MCF 10A (cell line): ENCODE measurements at regions of chr6 and their contacts with region 1.

Region 1: DNA sequence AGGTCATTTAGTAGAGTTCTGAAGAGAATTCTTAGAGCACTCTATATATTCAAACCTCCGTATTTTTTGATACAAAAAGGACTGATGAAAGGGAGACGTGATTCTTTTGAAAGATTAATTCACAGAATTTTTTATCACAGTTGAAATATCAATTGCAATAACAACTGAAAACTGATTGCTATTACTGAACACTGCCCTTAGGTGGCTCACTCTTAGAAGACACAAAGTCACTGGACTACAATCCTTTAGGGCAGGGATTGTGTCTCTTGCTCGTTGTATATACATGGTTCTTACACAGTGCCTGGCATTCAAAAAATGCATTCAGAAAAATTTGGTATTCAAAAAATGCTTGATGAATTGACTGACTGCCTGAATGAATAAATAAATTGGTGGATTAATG is 17.1 kb upstream of the CALHM6 start:
- DNase-seq: peak; percentile 53
- H3K4me3 Mint-ChIP-seq: no peak overlapping the region
- H3K27ac Mint-ChIP-seq: peak overlapping the region; percentile 37
- H3K4me1 Mint-ChIP-seq: peaks cover 24% of the 10 kb centered on the region
- H3K27me3 Mint-ChIP-seq: no peaks in the 10 kb centered on the region
- CTCF ChIP-seq: peak; percentile 54

Region 2: DNA sequence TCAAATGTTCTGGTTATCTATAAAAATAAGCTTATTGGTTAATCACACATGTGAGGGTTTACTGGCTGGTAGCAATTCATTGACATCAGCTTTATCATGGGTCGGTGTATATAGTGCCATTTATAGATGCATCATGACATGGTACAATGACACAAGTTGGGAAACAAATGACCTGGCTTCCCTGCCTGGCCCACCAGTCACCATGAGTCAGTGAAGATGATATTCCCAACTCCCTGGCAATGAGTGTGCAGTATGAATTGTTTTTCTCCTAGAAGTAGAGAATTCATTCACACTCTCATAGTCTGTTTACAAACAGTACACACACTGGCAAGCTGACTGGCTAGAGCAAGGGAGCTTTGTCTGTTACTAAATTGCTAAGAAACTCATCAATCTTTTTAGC is 20.1 kb before region 1 on chr6:
- CTCF ChIA-PET with region 1: interaction called, 14 read pairs
- POLR2A ChIA-PET with region 1: interaction called, 5 read pairs
- intact Hi-C with region 1: no loop called
- DNase-seq: peak; percentile 45
- H3K4me3 Mint-ChIP-seq: no peak overlapping the region
- H3K27ac Mint-ChIP-seq: peak overlapping the region; percentile 9
- H3K4me1 Mint-ChIP-seq: peaks cover 8% of the 10 kb centered on the region
- H3K27me3 Mint-ChIP-seq: no peaks in the 10 kb centered on the region
- CTCF ChIP-seq: no peak

Region 3: DNA sequence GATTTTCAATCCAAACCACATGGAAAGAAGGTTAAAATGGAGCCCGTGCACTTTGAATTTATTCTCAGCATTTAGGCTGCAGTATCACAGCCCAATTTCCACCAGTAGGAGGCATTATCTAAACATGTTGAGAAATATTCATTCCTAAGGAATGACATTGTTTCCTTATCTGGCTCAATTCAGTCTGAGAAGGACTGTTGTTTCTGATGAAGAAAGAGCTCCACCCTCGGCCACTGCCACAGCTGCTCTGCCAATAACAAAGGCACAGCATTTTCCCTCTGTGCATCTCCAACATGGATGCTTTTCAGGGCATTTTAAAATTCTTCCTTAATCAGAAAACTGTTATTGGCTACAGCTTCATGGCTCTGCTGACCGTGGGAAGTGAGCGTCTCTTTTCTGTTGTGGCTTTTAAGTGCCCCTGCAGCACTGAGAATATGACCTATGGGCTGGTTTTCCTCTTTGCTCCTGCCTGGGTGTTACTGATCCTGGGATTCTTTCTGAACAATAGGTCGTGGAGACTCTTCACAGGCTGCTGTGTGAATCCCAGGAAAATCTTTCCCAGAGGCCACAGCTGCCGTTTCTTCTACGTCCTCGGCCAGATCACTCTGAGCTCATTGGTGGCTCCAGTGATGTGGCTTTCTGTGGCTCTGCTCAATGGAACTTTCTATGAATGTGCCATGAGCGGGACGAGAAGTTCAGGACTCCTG is 67.5 kb after region 1 on chr6 and contains the start of gene CALHM5:
- CTCF ChIA-PET with region 1: interaction called, 14 read pairs
- POLR2A ChIA-PET with region 1: interaction called, 3 read pairs
- intact Hi-C with region 1: no loop called
- DNase-seq: peak; percentile 75
- H3K4me3 Mint-ChIP-seq: no peak within 1 kb of the TSS
- H3K27ac Mint-ChIP-seq: no peak within 1 kb of the TSS
- H3K4me1 Mint-ChIP-seq: peaks cover 6% of the 10 kb centered on the region
- H3K27me3 Mint-ChIP-seq: no peaks in the 10 kb centered on the region
- CTCF ChIP-seq: peak; percentile 59
- total RNA-seq, gene CALHM5: not detected in 2 replicates

Region 4: GRCh38 chr6:116697480-116697879 is 253.4 kb after region 1 on chr6:
- CTCF ChIA-PET with region 1: no interaction called
- POLR2A ChIA-PET with region 1: no interaction called
- intact Hi-C with region 1: no loop called
- DNase-seq: no peak
- H3K4me3 Mint-ChIP-seq: no peak overlapping the region
- H3K27ac Mint-ChIP-seq: no peak overlapping the region
- H3K4me1 Mint-ChIP-seq: no peaks in the 10 kb centered on the region
- H3K27me3 Mint-ChIP-seq: no peaks in the 10 kb centered on the region
- CTCF ChIP-seq: no peak